ENCODE measurements at regions of chr15 and their contacts with region 1.

Region 1: GRCh38 chr15:101358895-101359294 is 63.8 kb upstream of the SNRPA1 start:
- DNase-seq: peak; percentile 94
- H3K4me3 ChIP-seq: no peak overlapping the region
- H3K27ac ChIP-seq: peak overlapping the region; percentile 58
- H3K4me1 ChIP-seq: peaks cover 50% of the 10 kb centered on the region
- H3K27me3 ChIP-seq: no peaks in the 10 kb centered on the region
- CTCF ChIP-seq: no peak

Region 2: GRCh38 chr15:101320501-101321052 is 38.3 kb before region 1 on chr15:
- CTCF ChIA-PET with region 1: no interaction called
- dilution Hi-C with region 1: no loop called
- in situ Hi-C with region 1: no loop called
- intact Hi-C with region 1: loop called (anchors 1 kb)
- DNase-seq: no peak
- H3K4me3 ChIP-seq: no peak overlapping the region
- H3K27ac ChIP-seq: no peak overlapping the region
- H3K4me1 ChIP-seq: peaks cover 20% of the 10 kb centered on the region
- H3K27me3 ChIP-seq: peaks cover 2% of the 10 kb centered on the region
- CTCF ChIP-seq: no peak

Region 3: DNA sequence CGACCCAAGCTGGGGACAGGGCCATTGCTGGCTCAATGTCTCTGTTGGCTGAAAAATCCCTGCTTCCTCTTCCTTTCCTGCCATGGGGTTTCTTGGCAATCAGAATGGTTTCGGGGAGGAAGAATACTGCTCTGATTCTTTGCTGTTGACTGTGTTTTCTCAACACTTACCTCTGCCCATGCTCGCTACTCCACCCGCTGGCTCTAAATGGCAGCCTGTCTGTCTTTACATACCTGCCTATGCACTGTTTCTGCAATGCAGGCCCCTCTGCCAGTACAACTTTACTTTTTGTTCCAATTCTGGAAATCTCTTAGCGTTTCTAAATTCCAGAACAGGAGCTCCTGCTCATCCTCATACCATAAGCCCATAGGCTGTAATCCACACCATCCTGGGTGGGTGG is 25.5 kb before region 1 on chr15:
- CTCF ChIA-PET with region 1: no interaction called
- dilution Hi-C with region 1: no loop called
- in situ Hi-C with region 1: no loop called
- intact Hi-C with region 1: no loop called
- DNase-seq: no peak
- H3K4me3 ChIP-seq: no peak overlapping the region
- H3K27ac ChIP-seq: no peak overlapping the region
- H3K4me1 ChIP-seq: no peaks in the 10 kb centered on the region
- H3K27me3 ChIP-seq: no peaks in the 10 kb centered on the region
- CTCF ChIP-seq: no peak

Region 4: GRCh38 chr15:101489633-101490407 is 130.9 kb after region 1 on chr15 and contains the start of gene PCSK6:
- CTCF ChIA-PET with region 1: no interaction called
- dilution Hi-C with region 1: no loop called
- in situ Hi-C with region 1: no loop called
- intact Hi-C with region 1: loop called (anchors 5 kb)
- DNase-seq: no peak
- H3K4me3 ChIP-seq: no peak within 1 kb of the TSS
- H3K27ac ChIP-seq: no peak within 1 kb of the TSS
- H3K4me1 ChIP-seq: no peaks in the 10 kb centered on the region
- H3K27me3 ChIP-seq: peaks cover 11% of the 10 kb centered on the region
- CTCF ChIP-seq: no peak
- total RNA-seq, gene PCSK6: 1.7 to 6.1 TPM

Measured in mammary epithelial cell (primary cell).